Motor neuron (in vitro differentiated cells): ENCODE measurements at regions of chr7 and their contacts with region 1.

Region 1: DNA sequence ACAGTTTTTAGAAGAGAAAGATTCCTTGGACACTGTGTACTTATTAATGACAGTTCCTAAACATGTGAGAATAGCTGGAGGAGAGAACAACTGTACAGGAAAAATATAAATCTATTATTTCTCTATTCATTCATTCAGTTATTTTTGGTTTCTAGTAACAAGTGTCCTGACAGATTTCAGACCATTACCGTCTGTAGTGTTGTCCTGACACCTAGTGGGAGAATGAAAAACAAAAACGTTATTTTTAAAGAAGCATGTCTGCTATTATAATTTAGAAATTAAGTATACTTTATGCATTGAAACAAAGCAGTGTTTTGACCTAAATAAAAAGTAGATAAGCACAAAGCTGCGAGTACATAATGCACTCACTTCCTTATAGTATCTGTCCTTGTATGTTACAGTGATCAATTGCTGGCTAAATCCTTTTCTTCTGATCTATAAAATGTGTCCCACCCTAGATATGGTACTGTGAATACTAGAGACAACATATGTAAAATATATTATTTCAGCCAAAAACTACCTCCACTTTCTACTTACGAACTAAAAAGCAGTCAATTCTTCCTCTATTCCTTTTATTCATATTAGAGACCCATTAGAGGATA is 575.6 kb downstream of the ARL4A start:
- ATAC-seq: peak in 7 of 8 experiments; percentile 35 to 69 (median 57)
- H3K4me3 ChIP-seq: no peak overlapping the region
- H3K27ac ChIP-seq: no peak overlapping the region
- H3K4me1 ChIP-seq: peaks cover 4% of the 10 kb centered on the region in 2 donors

Region 2: GRCh38 chr7:12360948-12361347 is 902.1 kb before region 1 on chr7:
- in situ Hi-C with region 1: no loop called
- ATAC-seq: no peak
- H3K4me3 ChIP-seq: no peak overlapping the region
- H3K27ac ChIP-seq: no peak overlapping the region
- H3K4me1 ChIP-seq: no peaks in the 10 kb centered on the region

Region 3: DNA sequence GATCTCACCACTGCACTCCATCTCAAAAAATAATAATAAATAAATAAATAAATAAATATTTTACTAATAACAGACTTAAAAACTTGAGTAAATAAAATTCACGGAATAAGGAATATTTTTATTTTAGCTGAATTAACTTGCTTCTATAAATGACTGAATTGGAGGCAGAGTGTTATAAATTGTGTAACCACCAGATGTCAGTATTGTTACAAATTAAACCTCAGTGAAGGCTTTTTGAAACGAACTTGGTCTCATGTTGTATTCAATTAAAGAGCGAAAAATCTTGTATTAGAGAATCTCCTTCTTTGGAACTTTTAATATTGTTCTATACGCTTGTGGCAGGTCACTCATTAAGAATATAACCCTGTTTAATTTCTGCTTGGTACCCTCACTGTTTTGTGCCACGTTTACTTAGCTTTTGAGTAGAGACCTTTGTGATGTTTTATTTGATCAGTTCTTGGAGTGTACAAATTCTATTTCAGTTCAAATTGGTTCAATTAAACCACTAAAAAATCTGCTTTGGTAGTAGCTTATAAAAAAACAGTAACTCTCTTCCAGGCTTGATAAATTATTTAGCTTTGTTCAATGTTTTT is 738.1 kb before region 1 on chr7:
- in situ Hi-C with region 1: loop called in 3 of 9 experiments (anchors 25 kb)
- ATAC-seq: peak in 2 of 8 experiments; percentile 47 to 55
- H3K4me3 ChIP-seq: no peak overlapping the region
- H3K27ac ChIP-seq: no peak overlapping the region
- H3K4me1 ChIP-seq: no peaks in the 10 kb centered on the region

Region 4: GRCh38 chr7:12638851-12639467 is 624.1 kb before region 1 on chr7:
- in situ Hi-C with region 1: loop called in 7 of 9 experiments (anchors 10 to 25 kb)
- ATAC-seq: peak in 1 of 8 experiments; percentile 39
- H3K4me3 ChIP-seq: no peak overlapping the region
- H3K27ac ChIP-seq: no peak overlapping the region
- H3K4me1 ChIP-seq: no peaks in the 10 kb centered on the region

Region 5: DNA sequence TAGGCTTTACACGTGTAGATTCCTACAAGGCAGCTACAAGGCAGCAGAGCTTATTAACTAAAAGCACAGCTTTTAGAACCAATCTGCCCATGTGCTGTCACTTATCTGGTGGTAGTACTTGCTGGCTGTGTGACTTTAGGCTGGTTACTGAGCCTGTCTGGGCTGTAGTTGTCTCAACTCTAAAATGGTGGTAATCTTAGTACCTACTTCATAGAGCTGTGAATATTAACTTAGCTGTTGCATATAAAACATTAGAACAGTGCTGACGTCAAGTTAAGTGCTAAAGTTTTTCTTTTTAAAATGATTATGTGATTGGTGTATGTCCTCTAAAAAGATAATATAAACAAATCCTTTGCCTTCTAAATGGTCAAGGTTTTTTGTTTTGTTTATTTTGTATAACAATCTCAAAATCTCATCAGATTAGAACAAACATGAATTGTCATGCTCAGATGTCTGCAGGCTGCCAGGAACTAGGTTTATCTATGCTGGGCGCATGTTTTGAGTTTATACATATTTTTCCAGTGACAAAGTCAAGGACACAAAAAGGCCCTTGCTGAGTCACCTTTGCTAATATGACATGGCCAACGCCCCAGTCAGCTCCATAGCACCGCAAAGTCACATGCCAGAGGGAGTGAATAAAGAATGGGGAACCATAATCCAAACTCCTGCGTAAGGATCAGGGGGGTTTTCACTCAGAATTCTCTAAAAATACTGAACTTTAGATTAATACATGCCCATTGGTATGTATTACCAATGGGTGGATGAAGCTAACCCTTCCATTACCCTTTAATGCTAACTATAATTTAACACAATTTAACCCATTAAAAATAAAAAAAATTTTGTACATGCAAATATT is 615.4 kb before region 1 on chr7:
- in situ Hi-C with region 1: loop called in 7 of 9 experiments (anchors 10 to 25 kb)
- ATAC-seq: peak in 2 of 8 experiments; percentile 92 to 96
- H3K4me3 ChIP-seq: no peak overlapping the region
- H3K27ac ChIP-seq: no peak overlapping the region
- H3K4me1 ChIP-seq: no peaks in the 10 kb centered on the region

Region 6: GRCh38 chr7:12686894-12687717 is 575.9 kb before region 1 on chr7 and contains the start of gene ARL4A:
- in situ Hi-C with region 1: loop called in 1 of 9 experiments (anchors 10 kb)
- ATAC-seq: peak; percentile 85 to 95 (median 91)
- H3K4me3 ChIP-seq: peak within 1 kb of the TSS; percentile 67 to 86 (median 79)
- H3K27ac ChIP-seq: peak within 1 kb of the TSS; percentile 79 to 88
- H3K4me1 ChIP-seq: peaks cover 0 to 3% of the 10 kb centered on the region in 2 donors
- total RNA-seq, gene ARL4A: 12.9 to 73.5 (median 30.5) TPM